ENCODE measurements at regions of chr2 and their contacts with region 1.

Region 1: GRCh38 chr2:17851731-17852585 is 26.5 kb upstream of the KCNS3 start:
- DNase-seq: no peak
- ATAC-seq: peak; percentile 90
- H3K4me3 ChIP-seq: no peak overlapping the region
- H3K27ac ChIP-seq: no peak overlapping the region
- H3K4me1 ChIP-seq: no peaks in the 10 kb centered on the region
- H3K27me3 ChIP-seq: no peaks in the 10 kb centered on the region
- CTCF ChIP-seq: peak; percentile 90

Region 2: GRCh38 chr2:18149645-18150246 is 297.8 kb after region 1 on chr2:
- intact Hi-C with region 1: loop called (anchors 10 kb)
- DNase-seq: no peak
- ATAC-seq: peak; percentile 58
- H3K4me3 ChIP-seq: no peak overlapping the region
- H3K27ac ChIP-seq: no peak overlapping the region
- H3K4me1 ChIP-seq: no peaks in the 10 kb centered on the region
- H3K27me3 ChIP-seq: no peaks in the 10 kb centered on the region
- CTCF ChIP-seq: peak; percentile 79

Measured in upper lobe of right lung (tissue), 1 donor.